Activated B cell treated with CpG ODN at 0.5 μM for 24 hours (primary cell): ENCODE measurements at regions of chr17 and their contacts with region 1.

Region 1: GRCh38 chr17:37047631-37048104 is 98.9 kb downstream of the AATF start:
- DNase-seq: peak; percentile 54
- ATAC-seq: peak; percentile 66
- H3K4me3 Mint-ChIP-seq: no peak overlapping the region
- H3K27ac Mint-ChIP-seq: no peak overlapping the region
- H3K4me1 Mint-ChIP-seq: peaks cover 15% of the 10 kb centered on the region
- H3K27me3 Mint-ChIP-seq: no peaks in the 10 kb centered on the region
- CTCF ChIP-seq: peak; percentile 16

Region 2: GRCh38 chr17:35969558-35970380 is 1077.9 kb before region 1 on chr17:
- CTCF ChIA-PET with region 1: no interaction called
- POLR2A ChIA-PET with region 1: no interaction called
- intact Hi-C with region 1: loop called (anchors 2 kb)
- DNase-seq: peak; percentile 49
- ATAC-seq: peak; percentile 84
- H3K4me3 Mint-ChIP-seq: no peak overlapping the region
- H3K27ac Mint-ChIP-seq: no peak overlapping the region
- H3K4me1 Mint-ChIP-seq: peaks cover 1% of the 10 kb centered on the region
- H3K27me3 Mint-ChIP-seq: peaks cover 5% of the 10 kb centered on the region
- CTCF ChIP-seq: peak; percentile 62

Region 3: GRCh38 chr17:36705874-36706731 is 341.6 kb before region 1 on chr17:
- CTCF ChIA-PET with region 1: interaction called, 4 read pairs
- POLR2A ChIA-PET with region 1: no interaction called
- intact Hi-C with region 1: loop called (anchors 1 kb)
- DNase-seq: no peak
- ATAC-seq: peak; percentile 61
- H3K4me3 Mint-ChIP-seq: no peak overlapping the region
- H3K27ac Mint-ChIP-seq: no peak overlapping the region
- H3K4me1 Mint-ChIP-seq: no peaks in the 10 kb centered on the region
- H3K27me3 Mint-ChIP-seq: peaks cover 36% of the 10 kb centered on the region
- CTCF ChIP-seq: no peak

Region 4: GRCh38 chr17:37089956-37090355 is 42.3 kb after region 1 on chr17:
- CTCF ChIA-PET with region 1: no interaction called
- POLR2A ChIA-PET with region 1: no interaction called
- intact Hi-C with region 1: no loop called
- DNase-seq: no peak
- ATAC-seq: no peak
- H3K4me3 Mint-ChIP-seq: no peak overlapping the region
- H3K27ac Mint-ChIP-seq: peak overlapping the region; percentile 38
- H3K4me1 Mint-ChIP-seq: peaks cover 11% of the 10 kb centered on the region
- H3K27me3 Mint-ChIP-seq: no peaks in the 10 kb centered on the region
- CTCF ChIP-seq: no peak

Region 5: GRCh38 chr17:37134050-37134449 is 86.4 kb after region 1 on chr17:
- CTCF ChIA-PET with region 1: no interaction called
- POLR2A ChIA-PET with region 1: no interaction called
- intact Hi-C with region 1: no loop called
- DNase-seq: no peak
- ATAC-seq: no peak
- H3K4me3 Mint-ChIP-seq: no peak overlapping the region
- H3K27ac Mint-ChIP-seq: no peak overlapping the region
- H3K4me1 Mint-ChIP-seq: no peaks in the 10 kb centered on the region
- H3K27me3 Mint-ChIP-seq: no peaks in the 10 kb centered on the region
- CTCF ChIP-seq: no peak